Cardiac septum (tissue), 1 donor: ENCODE measurements at regions of chr4 and their contacts with region 1.

Region 1: GRCh38 chr4:42656944-42657792 is at the start of gene ATP8A1:
- DNase-seq: peak; percentile 96
- total RNA-seq, gene ATP8A1: 22.1 TPM

Region 2: DNA sequence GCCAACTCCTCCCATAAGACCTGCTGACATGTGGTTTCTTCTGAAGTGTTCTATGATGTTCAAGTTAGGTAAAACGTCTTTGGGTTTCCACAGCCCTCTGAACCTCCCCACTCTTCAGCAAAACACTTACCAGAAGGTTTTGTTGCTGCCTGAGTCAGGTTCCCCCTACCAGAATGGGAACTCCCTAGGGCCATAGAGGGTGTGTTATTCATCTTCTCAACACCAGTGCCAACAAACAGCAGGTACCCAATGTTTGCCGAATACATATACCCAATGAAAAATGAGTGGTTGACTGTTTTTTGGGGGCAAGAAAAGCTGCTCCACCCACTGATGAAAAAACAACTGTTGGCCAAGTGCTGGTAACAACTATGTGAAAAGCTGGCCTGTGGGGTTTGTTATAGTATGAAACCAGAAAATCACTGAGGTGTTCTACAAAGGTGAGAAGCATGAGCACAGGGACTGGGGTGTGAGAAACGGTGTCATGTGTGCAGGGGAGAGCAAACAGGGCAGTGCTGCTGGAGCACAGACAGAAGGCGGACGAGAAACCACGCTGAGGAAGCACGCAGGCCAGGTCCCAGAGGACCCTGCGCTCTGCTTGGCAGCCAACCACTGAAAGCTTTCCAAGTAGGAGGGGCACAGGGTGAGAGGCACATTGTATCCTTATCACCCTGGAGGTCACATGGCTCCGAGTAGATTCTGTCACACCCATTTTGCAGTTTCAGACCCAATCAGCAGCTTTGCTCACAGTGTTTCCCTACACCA is 29.1 kb before region 1 on chr4:
- intact Hi-C with region 1: loop called (anchors 2 kb)
- DNase-seq: peak; percentile 88